ENCODE measurements at regions of chr4 and their contacts with region 1.

Region 1: DNA sequence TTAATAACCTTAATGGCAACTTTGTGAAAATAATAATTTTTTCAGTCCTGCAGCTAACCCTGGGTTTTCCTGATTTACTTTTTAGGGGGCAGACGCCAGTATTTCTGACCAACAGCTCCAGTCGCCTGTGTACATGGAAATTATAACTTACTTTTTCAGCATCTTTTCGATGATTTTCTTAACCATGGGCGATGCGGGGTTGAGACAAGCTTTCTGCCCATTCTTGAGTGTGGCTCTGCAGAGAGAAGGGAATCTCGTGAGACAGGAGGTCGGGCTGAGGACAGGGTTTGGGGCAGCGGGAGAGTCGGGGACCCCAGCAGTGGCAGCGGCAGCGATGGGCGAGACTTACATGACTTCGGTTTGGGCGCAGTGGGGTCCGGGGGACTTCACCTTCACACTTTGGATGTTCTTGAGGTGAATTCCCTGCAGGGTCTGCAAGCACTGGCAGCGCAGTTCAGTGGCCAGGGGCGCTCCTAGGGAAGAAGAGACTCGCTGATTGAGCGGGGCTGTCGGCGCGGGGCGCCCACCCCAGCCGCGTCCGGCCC is 473 bp downstream of the CXCL2 start:
- DNase-seq: no peak
- H3K4me3 Mint-ChIP-seq: peak overlapping the region; percentile 84
- H3K27ac Mint-ChIP-seq: peak overlapping the region; percentile 88
- H3K4me1 Mint-ChIP-seq: peaks cover 34% of the 10 kb centered on the region
- H3K27me3 Mint-ChIP-seq: no peaks in the 10 kb centered on the region
- CTCF ChIP-seq: no peak

Region 2: DNA sequence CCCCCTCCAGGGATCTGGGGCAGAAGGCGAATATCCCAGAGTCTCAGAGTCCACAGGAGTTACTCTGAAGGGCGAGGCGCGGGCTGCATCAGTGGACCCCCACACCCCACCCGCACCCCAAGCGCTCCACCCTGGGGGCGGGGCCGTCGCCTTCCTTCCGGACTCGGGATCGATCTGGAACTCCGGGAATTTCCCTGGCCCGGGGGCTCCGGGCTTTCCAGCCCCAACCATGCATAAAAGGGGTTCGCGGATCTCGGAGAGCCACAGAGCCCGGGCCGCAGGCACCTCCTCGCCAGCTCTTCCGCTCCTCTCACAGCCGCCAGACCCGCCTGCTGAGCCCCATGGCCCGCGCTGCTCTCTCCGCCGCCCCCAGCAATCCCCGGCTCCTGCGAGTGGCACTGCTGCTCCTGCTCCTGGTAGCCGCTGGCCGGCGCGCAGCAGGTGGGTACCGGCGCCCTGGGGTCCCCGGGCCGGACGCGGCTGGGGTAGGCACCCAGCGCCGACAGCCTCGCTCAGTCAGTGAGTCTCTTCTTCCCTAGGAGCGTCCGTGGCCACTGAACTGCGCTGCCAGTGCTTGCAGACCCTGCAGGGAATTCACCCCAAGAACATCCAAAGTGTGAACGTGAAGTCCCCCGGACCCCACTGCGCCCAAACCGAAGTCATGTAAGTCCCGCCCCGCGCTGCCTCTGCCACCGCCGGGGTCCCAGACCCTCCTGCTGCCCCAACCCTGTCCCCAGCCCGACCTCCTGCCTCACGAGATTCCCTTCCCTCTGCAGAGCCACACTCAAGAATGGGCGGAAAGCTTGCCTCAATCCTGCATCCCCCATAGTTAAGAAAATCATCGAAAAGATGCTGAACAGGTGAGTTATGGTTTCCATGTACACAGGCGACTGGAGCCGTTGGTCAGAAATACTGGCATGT is 229.1 kb before region 1 on chr4 and contains the start of gene CXCL1:
- CTCF ChIA-PET with region 1: interaction called, 23 read pairs
- POLR2A ChIA-PET with region 1: interaction called, 34 read pairs
- intact Hi-C with region 1: loop called (anchors 1 kb)
- DNase-seq: peak; percentile 74
- H3K4me3 Mint-ChIP-seq: peak within 1 kb of the TSS; percentile 95
- H3K27ac Mint-ChIP-seq: peak within 1 kb of the TSS; percentile 92
- H3K4me1 Mint-ChIP-seq: peaks cover 37% of the 10 kb centered on the region
- H3K27me3 Mint-ChIP-seq: no peaks in the 10 kb centered on the region
- CTCF ChIP-seq: no peak
- total RNA-seq, gene CXCL1: 35.0 and 49.3 TPM in 2 replicates

Region 3: GRCh38 chr4:74056858-74057562 is 41.5 kb before region 1 on chr4:
- CTCF ChIA-PET with region 1: interaction called, 4 read pairs
- POLR2A ChIA-PET with region 1: interaction called, 23 read pairs
- intact Hi-C with region 1: loop called (anchors 2 kb)
- DNase-seq: peak; percentile 70
- H3K4me3 Mint-ChIP-seq: no peak overlapping the region
- H3K27ac Mint-ChIP-seq: peak overlapping the region; percentile 53
- H3K4me1 Mint-ChIP-seq: peaks cover 19% of the 10 kb centered on the region
- H3K27me3 Mint-ChIP-seq: no peaks in the 10 kb centered on the region
- CTCF ChIP-seq: no peak

Region 4: DNA sequence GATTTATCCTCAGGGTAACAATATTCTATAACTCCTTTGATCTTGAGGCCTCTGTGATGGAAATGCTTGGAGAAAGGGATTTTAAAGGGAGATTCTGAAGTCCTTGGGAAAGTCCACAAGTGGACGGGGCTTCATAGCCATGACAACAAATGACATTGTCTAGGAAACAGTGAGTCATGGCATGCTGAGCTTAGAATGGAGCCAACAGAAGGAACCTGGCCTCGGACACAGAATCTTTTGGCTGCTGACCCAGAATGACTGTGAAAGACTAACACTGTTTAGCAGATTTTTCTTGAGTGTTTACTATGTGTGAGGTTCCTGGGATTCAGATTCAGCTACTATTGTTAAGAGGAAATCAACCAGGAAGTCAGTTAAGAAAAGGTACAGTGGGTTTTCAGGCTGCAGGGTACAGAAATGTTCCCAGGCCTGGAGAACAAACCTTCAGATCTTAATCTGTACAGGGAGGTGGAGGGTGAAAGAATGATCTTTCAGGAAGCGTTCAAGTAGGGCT is 18.6 kb after region 1 on chr4:
- CTCF ChIA-PET with region 1: interaction called, 52 read pairs
- POLR2A ChIA-PET with region 1: interaction called, 521 read pairs
- intact Hi-C with region 1: no loop called
- DNase-seq: peak; percentile 96
- H3K4me3 Mint-ChIP-seq: peak overlapping the region; percentile 88
- H3K27ac Mint-ChIP-seq: peak overlapping the region; percentile 99
- H3K4me1 Mint-ChIP-seq: peaks cover 44% of the 10 kb centered on the region
- H3K27me3 Mint-ChIP-seq: no peaks in the 10 kb centered on the region
- CTCF ChIP-seq: no peak

Region 5: DNA sequence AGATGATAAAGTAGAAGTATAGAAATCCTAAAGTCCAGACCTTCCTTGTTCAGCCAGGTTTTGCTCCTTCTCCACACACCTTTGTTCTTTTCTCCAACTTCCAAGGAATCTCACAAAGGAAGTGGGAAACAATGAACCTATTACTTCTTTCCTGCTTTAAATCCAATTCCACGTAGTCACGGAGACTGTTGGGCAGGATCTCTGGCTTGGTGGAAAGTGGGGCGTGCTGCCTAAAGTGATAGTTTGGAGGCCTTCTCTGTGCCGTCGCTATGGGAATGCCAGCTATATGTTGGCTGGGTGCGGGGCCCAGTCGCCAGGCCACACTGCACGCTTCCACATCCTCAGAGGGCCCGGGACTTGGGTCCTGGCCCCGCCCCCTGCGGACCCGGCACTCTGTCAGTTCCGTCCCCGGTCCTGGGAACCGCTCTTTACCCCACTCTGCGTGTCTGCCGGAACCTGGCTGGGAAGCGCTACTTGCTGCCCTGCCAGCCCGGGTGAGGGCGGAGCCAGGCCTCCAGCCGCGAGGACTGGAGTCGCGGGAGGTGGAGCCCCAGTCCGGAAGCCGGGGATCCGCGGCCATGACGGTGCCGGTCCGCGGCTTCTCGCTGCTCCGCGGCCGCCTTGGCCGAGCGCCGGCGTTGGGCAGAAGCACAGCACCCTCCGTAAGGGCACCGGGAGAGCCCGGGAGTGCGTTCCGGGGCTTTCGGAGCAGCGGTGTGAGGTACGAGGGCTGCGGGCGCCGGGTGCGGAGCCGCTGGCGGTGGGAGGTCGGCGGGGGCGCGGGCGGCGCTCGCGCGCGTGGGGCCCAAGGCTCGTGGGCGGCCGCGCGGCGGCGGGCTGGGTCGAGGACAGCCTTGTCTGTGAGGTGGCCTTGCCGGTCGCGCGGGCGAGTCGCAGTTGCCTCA is 59.3 kb after region 1 on chr4 and contains the start of gene MTHFD2L:
- CTCF ChIA-PET with region 1: interaction called, 5 read pairs
- POLR2A ChIA-PET with region 1: interaction called, 43 read pairs
- intact Hi-C with region 1: loop called (anchors 1 kb)
- DNase-seq: peak; percentile 95
- H3K4me3 Mint-ChIP-seq: peak within 1 kb of the TSS; percentile 91
- H3K27ac Mint-ChIP-seq: peak within 1 kb of the TSS; percentile 94
- H3K4me1 Mint-ChIP-seq: peaks cover 33% of the 10 kb centered on the region
- H3K27me3 Mint-ChIP-seq: no peaks in the 10 kb centered on the region
- CTCF ChIP-seq: no peak
- total RNA-seq, gene MTHFD2L: 110 and 113 TPM in 2 replicates

Region 6: GRCh38 chr4:75623026-75623425 is 1524.5 kb after region 1 on chr4:
- CTCF ChIA-PET with region 1: no interaction called
- POLR2A ChIA-PET with region 1: no interaction called
- intact Hi-C with region 1: no loop called
- DNase-seq: no peak
- H3K4me3 Mint-ChIP-seq: no peak overlapping the region
- H3K27ac Mint-ChIP-seq: no peak overlapping the region
- H3K4me1 Mint-ChIP-seq: no peaks in the 10 kb centered on the region
- H3K27me3 Mint-ChIP-seq: no peaks in the 10 kb centered on the region
- CTCF ChIP-seq: no peak

Measured in MCF 10A (cell line).